Cardiac septum (tissue), 1 donor: ENCODE measurements at regions of chr19 and their contacts with region 1.

Region 1: GRCh38 chr19:9309974-9310446 is 372 bp upstream of the ZNF699 start:
- DNase-seq: peak; percentile 94

Region 2: DNA sequence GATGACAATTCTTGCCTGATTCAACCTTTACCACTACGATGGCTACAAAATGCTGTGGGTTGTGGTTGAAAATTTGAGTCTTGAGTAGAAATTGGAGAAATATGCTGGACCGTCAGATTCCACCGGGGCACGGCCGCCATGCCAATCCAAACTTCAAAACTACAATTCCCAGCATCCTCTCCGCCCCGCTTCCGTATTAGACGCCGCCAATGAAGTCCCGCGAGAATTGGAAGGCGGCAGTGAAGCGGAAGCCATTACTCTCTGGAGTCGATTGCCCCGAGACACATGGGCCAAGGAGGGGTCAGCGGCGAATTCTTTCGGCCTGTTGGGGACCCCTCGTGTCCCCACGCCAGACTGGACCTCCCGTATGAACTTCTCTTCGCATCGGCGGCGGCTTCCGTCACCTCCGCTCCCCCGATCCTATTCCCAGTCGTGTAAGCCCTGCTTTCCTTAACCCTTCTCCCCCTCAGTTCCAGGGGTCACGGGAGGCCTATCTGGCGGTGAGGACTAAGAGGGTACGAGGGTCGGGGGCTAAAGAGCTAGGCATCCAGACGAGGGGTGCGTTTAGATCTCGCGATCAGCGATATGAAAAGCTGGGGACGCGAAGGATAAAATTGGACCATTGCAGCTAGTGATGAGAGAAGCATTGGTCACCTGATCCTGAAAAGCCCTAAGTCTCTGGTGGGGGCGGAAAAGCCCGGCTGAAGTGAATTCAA is 169.7 kb before region 1 on chr19 and contains the start of gene ZNF317:
- intact Hi-C with region 1: loop called (anchors 10 kb)
- DNase-seq: peak; percentile 96
- total RNA-seq, gene ZNF317: 13.8 TPM

Region 3: GRCh38 chr19:9323919-9324583 is 14.0 kb after region 1 on chr19 and contains the start of gene ZNF559:
- intact Hi-C with region 1: loop called (anchors 2 kb)
- DNase-seq: peak; percentile 95
- total RNA-seq, gene ZNF559: 18.2 TPM

Region 4: DNA sequence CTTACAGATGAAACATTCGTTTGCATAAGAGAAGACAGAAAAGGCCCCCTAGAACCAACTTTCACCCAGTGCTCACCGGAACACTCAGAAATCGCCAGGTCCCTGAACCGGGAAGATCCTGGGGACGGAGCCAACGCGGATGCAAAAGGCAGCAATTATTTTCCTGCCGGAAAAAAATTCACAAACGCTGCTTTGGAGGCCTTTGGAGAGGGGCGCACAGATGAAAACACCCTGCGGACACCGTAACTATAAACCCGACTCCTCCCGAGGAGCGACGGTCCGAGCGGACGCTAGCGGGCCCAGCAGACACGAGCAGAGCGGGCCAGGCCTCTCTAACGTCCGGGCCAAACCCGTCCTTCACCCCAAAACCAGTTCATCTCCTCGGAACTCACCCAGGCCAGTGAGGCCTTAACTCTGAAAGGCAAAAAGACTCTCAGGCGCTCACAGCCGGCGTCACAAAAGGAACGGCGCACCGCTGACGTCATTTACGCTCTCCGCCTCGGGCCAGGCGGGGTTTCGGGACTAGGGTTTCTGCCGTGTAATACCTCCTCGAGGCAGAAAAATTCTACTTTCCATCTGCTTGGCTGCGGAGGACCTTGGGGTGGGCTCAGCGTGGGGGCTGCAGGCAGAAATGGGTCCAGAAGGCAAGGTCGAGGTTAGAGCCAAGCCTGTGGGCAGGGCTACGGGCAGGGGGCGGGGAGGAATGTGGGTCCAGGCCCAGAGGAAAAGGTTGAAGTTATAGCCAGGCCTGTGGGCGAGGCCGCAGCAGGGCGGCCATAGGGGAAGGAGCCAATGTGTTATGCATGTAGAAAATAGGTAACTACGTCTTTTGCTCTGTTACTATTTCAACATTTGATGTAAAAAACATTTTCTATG is 228.4 kb after region 1 on chr19 and contains the start of gene ZNF426:
- intact Hi-C with region 1: loop called (anchors 5 kb)
- DNase-seq: peak; percentile 95
- total RNA-seq, gene ZNF426: 14.8 TPM

Region 5: DNA sequence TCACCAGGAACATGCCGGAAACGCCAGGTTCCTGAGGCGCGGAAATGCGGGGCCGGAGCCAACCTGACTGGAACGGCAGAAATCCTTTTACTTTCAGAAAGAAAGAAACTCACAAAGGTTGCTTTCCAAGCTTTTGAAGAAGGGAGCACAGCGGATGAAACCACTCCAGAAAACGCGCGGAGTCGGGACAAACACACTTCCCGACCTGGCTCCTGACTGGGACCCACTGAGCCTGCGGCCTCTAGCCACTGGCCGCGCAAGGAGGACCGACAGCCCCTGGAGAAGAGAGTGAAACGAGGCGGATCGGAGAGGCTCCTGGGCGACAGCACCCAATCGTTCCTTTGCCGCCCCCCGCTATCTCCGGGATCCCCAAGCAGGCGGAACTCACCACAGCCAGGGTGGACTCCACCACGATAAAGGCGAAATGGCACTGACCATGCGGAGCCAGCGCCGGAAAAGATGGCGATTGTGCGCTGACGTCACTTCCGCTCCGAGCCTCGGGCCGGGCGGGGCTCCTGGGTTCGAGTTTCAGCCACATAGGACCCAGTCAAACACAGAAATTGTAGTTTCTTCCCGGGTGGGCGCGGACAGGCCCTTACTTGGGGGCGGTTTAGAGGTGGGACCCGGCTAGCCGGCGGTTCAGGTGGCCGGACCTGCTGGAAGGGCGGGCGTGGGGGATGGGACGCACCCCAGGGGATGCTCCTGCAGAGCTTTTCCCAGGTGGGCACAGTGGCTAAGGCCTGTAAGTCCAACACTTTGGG is 274.2 kb after region 1 on chr19 and contains the start of gene ZNF121:
- intact Hi-C with region 1: loop called (anchors 10 kb)
- DNase-seq: peak; percentile 93
- total RNA-seq, gene ZNF121: 23.5 TPM